ENCODE measurements at regions of chr21 and their contacts with region 1.

Region 1: DNA sequence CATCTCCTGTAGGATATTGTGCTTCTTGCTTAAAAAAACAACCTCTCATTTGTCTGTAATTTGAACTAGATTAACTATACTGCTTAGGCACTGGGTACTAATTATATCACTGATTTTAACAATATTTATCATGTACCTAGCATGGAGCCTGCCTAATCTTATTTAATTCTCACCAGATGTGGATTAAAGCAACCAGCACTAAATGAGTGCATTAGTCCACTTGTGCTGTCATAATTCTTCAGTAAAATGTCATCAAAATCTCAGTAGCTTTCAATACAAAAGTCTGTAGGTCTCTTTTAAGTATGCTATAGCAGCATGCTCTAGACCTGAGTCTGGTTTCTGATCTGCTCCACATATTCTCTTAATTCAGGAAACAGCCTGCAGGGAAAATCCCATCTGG is 368.1 kb downstream of the NCAM2 start:
- DNase-seq: no peak
- H3K4me3 ChIP-seq: no peak overlapping the region
- H3K27ac ChIP-seq: peak overlapping the region in 1 of 4 donors; percentile 47
- H3K4me1 ChIP-seq: no peaks in the 10 kb centered on the region
- H3K27me3 ChIP-seq: no peaks in the 10 kb centered on the region
- CTCF ChIP-seq: no peak
- EP300 ChIP-seq: no peak
- POLR2A ChIP-seq: no peak

Region 2: DNA sequence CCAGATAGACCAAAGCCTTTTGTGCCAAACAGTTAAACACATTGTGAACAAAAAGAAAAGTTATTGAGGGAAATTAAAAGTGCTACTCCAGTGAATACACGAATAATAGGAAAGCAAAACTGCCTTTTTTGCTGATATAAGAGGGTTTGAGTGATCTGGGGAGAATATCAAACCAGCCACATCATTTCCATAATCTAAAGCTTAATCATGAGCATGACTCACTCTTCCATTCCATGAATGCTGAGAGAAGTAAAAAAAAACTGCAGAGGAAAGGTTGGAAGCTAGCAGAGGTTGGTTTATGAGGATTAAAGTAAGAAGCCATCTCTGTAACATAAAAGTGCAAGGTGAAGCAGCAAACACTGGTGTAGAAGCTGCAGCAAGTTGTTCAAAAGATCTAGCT is 718.7 kb before region 1 on chr21:
- intact Hi-C with region 1: no loop called
- DNase-seq: no peak
- H3K4me3 ChIP-seq: no peak overlapping the region
- H3K27ac ChIP-seq: no peak overlapping the region
- H3K4me1 ChIP-seq: no peaks in the 10 kb centered on the region
- H3K27me3 ChIP-seq: no peaks in the 10 kb centered on the region
- CTCF ChIP-seq: no peak
- EP300 ChIP-seq: no peak
- POLR2A ChIP-seq: no peak

Region 3: DNA sequence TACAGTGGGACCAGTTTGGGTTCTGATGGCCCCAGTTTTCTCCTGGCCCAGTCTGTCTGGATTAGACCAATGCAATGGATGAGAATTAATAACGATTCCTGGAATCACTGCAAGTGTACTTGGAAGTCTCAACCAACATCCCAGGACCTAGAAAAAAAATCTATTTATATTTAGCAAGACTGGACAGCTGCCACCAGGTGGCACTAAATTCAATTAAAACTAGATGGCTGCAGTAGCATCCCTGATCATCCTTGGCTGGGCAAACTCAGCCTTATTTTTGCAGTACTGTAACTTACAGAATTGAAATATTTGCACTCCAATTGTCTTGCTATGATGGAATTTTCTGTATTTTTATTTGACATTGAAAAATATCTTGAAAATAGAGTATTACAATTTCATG is 202.4 kb before region 1 on chr21:
- intact Hi-C with region 1: loop called (anchors 10 kb)
- DNase-seq: no peak
- H3K4me3 ChIP-seq: no peak overlapping the region
- H3K27ac ChIP-seq: no peak overlapping the region
- H3K4me1 ChIP-seq: peaks cover 0 to 16% (median 6%) of the 10 kb centered on the region in 4 donors
- H3K27me3 ChIP-seq: no peaks in the 10 kb centered on the region
- CTCF ChIP-seq: peak; percentile 39 to 66 (median 50)
- EP300 ChIP-seq: no peak
- POLR2A ChIP-seq: no peak

Measured in esophagus muscularis mucosa (tissue), 4 donors.